CD8-positive, alpha-beta T cell (primary cell): ENCODE measurements at regions of chr3 and their contacts with region 1.

Region 1: DNA sequence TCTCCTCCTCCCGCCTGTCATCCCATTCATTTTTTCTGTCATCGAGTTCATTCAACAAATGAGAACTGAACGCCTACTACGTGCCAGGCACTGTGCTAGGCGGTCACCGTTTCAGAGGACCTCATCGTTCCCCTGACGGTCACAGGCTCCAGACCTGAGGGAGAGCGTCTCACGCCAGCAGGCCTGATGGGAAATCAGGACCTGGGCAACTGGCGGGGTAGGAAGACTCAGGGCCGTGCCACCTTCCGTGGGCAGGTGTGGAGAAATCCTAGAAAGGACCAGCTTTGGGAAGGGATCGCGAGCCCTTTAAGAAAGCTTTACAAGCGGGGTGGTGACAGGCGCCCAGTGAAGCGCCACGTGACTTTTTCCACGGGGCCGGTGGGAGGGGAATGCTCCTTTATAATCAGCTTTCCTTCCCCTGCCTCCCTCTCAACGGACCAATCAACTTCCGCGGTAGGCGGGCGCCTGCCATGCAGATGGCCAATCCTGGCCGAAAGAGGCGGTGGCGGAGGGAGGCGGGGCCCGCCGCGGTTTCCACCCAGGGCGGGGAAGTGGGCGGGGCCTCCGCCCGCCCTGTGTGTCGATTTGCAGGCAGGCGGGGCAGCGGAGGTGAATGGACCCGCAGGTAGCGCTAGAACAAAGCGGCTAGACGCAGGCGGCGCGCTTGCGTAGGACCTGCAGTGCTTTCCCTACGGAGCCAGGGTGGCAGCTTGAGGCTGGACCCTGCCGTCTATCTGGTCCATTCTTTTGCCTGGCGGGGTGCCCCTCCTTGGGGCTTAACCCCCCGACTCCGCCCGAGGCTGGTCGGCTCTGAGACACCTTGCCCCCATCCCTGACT is 816 bp upstream of the DUSP7 start:
- DNase-seq: peak; percentile 99 to 100 (median 99)
- ATAC-seq: peak; percentile 84
- H3K4me3 ChIP-seq: peak overlapping the region; percentile 68 to 77
- H3K4me3 Mint-ChIP-seq: peak overlapping the region; percentile 91
- H3K27ac ChIP-seq: peak overlapping the region; percentile 52 to 87
- H3K27ac Mint-ChIP-seq: peak overlapping the region; percentile 90
- H3K4me1 ChIP-seq: peaks cover 36% of the 10 kb centered on the region
- H3K4me1 Mint-ChIP-seq: peaks cover 35% of the 10 kb centered on the region
- H3K27me3 ChIP-seq: no peaks in the 10 kb centered on the region
- H3K27me3 Mint-ChIP-seq: no peaks in the 10 kb centered on the region
- CTCF ChIP-seq: no peak

Region 2: DNA sequence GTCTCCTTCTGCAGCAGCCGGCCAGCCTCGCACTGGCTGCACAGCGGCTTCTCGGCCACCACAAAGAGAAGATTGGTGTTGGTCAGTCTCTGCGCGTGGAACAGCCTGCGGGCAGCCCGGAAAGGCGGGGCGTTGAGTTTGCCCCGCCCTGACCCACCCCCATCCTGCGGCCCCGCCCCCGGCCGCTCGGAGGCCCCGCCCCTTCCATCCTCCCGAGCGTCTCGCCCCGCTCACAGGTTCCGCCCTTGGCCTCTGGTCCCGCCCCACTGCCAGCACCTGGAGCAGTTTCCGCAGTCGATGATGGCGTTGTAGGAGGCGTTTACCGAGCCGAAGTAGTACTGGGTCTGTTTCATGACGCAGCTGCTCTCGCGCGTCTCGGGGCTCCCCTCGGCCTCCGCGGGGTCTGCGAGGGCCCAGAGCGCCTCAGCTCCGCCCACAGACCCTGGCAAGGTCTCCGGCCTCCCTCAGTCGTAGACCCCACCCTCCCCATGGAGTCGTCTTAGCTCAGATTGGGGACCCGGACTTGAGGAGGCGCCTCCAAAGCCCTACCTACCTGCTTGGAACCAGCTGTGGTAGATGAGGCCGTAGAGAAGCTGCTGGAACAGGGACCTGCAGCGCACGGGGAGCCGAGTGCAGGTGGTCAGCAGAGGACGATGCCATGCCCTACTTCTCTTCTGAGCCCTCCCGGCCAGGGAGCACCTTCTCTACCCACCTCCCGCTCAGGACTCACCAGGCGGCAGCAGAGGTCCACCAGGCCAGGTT is 1691.9 kb before region 1 on chr3:
- CTCF ChIA-PET with region 1: no interaction called
- POLR2A ChIA-PET with region 1: no interaction called
- intact Hi-C with region 1: loop called in 1 of 2 experiments (anchors 10 kb)
- DNase-seq: peak; percentile 89 to 98 (median 94)
- ATAC-seq: peak; percentile 95
- H3K4me3 ChIP-seq: peak overlapping the region; percentile 68 to 81
- H3K4me3 Mint-ChIP-seq: peak overlapping the region; percentile 87
- H3K27ac ChIP-seq: peak overlapping the region; percentile 91 to 92
- H3K27ac Mint-ChIP-seq: peak overlapping the region; percentile 95
- H3K4me1 ChIP-seq: peaks cover 20% of the 10 kb centered on the region
- H3K4me1 Mint-ChIP-seq: peaks cover 35% of the 10 kb centered on the region
- H3K27me3 ChIP-seq: no peaks in the 10 kb centered on the region
- H3K27me3 Mint-ChIP-seq: no peaks in the 10 kb centered on the region
- CTCF ChIP-seq: no peak

Region 3: DNA sequence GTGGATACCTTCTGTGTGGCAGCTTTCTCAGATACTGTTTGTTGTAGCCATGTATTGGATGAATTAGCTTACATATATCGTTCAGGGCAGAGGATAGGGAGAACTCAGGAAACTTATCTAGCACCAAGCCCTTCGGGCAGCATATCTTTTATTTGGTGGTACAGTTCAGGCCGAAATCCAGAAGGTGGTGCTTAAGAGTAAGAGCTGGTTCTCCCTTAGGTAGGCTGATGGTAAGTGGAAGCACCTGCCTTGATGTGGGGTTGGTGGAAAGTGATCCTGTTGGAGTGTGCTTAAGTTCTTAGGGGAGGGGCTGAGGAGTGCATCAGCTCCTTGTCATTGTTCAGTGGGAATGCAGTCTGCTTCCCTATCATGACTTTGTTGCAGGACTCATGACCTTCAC is 1195.0 kb before region 1 on chr3:
- CTCF ChIA-PET with region 1: no interaction called
- POLR2A ChIA-PET with region 1: no interaction called
- intact Hi-C with region 1: no loop called
- DNase-seq: no peak
- ATAC-seq: no peak
- H3K4me3 ChIP-seq: no peak overlapping the region
- H3K4me3 Mint-ChIP-seq: no peak overlapping the region
- H3K27ac ChIP-seq: no peak overlapping the region
- H3K27ac Mint-ChIP-seq: no peak overlapping the region
- H3K4me1 ChIP-seq: no peaks in the 10 kb centered on the region
- H3K4me1 Mint-ChIP-seq: no peaks in the 10 kb centered on the region
- H3K27me3 ChIP-seq: no peaks in the 10 kb centered on the region
- H3K27me3 Mint-ChIP-seq: peaks cover 10% of the 10 kb centered on the region
- CTCF ChIP-seq: no peak

Region 4: DNA sequence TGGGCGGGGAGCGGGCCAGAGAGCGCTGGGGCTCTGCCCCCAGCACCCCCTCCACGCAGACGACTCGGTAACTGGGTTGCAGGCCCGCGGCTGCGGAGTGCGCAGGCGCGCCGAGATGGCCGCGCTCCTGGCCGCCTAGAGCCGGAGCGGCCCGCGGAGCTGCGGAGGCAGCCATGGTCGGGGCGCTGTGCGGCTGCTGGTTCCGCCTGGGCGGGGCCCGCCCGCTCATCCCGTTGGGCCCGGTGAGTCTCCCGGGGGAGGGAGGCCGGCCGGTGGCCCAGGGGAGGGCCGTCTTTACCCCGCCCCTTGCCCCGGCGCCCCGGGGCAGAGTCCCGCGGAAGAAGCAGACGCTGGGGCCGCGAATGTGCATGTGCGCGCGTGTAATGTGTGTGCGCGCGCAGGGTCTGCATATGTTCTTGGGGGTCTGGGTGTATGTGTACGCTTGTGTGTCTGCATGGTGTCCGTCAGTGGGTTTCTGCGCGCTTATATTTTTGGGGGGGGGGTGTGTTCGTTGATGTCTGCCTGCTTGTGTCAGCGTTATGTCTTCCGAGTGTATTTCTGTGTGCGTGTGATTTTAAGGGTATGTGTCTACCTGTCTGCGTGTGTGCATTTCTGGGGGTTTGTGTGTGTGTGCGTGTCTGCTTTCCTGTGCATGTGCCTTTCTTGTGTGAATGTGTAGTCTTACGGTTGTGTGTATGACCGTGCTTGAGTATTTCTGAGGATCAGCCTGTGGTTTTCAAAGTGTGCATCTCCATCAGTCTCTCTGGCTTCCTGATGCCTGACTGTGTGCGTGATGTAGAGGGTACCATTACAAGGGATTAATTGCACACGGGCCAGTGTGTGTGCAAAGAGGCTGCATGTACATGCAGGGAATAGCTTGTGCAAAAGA is 82.0 kb before region 1 on chr3 and contains the start of gene ABHD14A:
- CTCF ChIA-PET with region 1: interaction called, 6 read pairs
- POLR2A ChIA-PET with region 1: interaction called, 3 read pairs
- intact Hi-C with region 1: loop called in 1 of 2 experiments (anchors 1 kb)
- DNase-seq: peak; percentile 35 to 89 (median 69)
- ATAC-seq: peak; percentile 66
- H3K4me3 ChIP-seq: peak within 1 kb of the TSS; percentile 86 to 92
- H3K4me3 Mint-ChIP-seq: peak within 1 kb of the TSS; percentile 88
- H3K27ac ChIP-seq: peak within 1 kb of the TSS; percentile 50 to 72
- H3K27ac Mint-ChIP-seq: peak within 1 kb of the TSS; percentile 87
- H3K4me1 ChIP-seq: peaks cover 33% of the 10 kb centered on the region
- H3K4me1 Mint-ChIP-seq: peaks cover 31% of the 10 kb centered on the region
- H3K27me3 ChIP-seq: no peaks in the 10 kb centered on the region
- H3K27me3 Mint-ChIP-seq: no peaks in the 10 kb centered on the region
- CTCF ChIP-seq: no peak
- total RNA-seq, gene ABHD14A: 6.8 to 6.9 TPM

Region 5: GRCh38 chr3:52123106-52123725 is 66.0 kb after region 1 on chr3:
- CTCF ChIA-PET with region 1: interaction called, 25 read pairs
- POLR2A ChIA-PET with region 1: no interaction called
- intact Hi-C with region 1: loop called (anchors 2 to 5 kb)
- DNase-seq: peak; percentile 47 to 85 (median 74)
- ATAC-seq: peak; percentile 97
- H3K4me3 ChIP-seq: no peak overlapping the region
- H3K4me3 Mint-ChIP-seq: no peak overlapping the region
- H3K27ac ChIP-seq: no peak overlapping the region
- H3K27ac Mint-ChIP-seq: no peak overlapping the region
- H3K4me1 ChIP-seq: no peaks in the 10 kb centered on the region
- H3K4me1 Mint-ChIP-seq: no peaks in the 10 kb centered on the region
- H3K27me3 ChIP-seq: no peaks in the 10 kb centered on the region
- H3K27me3 Mint-ChIP-seq: no peaks in the 10 kb centered on the region
- CTCF ChIP-seq: peak; percentile 92

Region 6: DNA sequence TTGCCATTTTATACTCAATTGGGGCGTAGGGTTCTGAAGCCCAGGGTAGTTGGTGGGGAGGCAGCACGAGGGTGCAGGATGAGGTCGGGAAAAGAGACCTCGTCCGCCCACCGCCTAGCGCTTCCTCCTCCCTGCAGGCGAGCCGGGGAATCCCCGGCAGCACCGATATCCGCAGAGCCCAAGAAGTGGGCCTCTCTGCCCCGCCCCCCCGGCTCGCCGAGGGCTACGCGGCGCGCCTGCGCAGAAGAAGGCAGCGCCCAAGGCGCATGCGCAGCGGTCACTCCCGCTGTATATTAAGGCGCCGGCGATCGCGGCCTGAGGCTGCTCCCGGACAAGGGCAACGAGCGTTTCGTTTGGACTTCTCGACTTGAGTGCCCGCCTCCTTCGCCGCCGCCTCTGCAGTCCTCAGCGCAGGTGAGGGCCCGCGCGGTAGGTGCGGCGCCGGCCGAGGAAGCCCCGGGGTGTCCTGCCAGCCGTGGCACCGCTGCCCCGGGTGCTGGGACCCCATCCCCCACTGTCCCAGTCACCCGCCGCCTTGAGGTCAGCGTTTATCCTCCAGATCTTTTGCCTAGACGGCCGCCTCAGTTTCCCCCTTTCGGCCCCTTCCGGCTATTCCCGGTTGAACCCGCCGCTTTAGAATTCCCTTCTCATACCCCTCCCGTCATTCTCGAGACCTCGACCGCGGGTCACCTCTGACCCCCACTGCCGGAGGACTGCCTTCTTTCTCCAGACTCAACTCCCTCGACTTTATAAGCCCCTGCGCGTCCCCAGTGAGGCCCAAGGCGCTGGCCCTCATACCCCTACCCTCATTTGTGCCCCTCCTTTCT is 140.9 kb after region 1 on chr3 and contains the start of gene ALAS1:
- CTCF ChIA-PET with region 1: no interaction called
- POLR2A ChIA-PET with region 1: no interaction called
- intact Hi-C with region 1: loop called in 1 of 2 experiments (anchors 1 kb)
- DNase-seq: peak; percentile 86 to 98 (median 95)
- ATAC-seq: peak; percentile 98
- H3K4me3 ChIP-seq: peak within 1 kb of the TSS; percentile 88 to 93
- H3K4me3 Mint-ChIP-seq: peak within 1 kb of the TSS; percentile 96
- H3K27ac ChIP-seq: peak within 1 kb of the TSS; percentile 69 to 86
- H3K27ac Mint-ChIP-seq: peak within 1 kb of the TSS; percentile 94
- H3K4me1 ChIP-seq: peaks cover 32% of the 10 kb centered on the region
- H3K4me1 Mint-ChIP-seq: peaks cover 41% of the 10 kb centered on the region
- H3K27me3 ChIP-seq: no peaks in the 10 kb centered on the region
- H3K27me3 Mint-ChIP-seq: no peaks in the 10 kb centered on the region
- CTCF ChIP-seq: no peak
- total RNA-seq, gene ALAS1: 6.0 to 6.6 TPM

Region 7: DNA sequence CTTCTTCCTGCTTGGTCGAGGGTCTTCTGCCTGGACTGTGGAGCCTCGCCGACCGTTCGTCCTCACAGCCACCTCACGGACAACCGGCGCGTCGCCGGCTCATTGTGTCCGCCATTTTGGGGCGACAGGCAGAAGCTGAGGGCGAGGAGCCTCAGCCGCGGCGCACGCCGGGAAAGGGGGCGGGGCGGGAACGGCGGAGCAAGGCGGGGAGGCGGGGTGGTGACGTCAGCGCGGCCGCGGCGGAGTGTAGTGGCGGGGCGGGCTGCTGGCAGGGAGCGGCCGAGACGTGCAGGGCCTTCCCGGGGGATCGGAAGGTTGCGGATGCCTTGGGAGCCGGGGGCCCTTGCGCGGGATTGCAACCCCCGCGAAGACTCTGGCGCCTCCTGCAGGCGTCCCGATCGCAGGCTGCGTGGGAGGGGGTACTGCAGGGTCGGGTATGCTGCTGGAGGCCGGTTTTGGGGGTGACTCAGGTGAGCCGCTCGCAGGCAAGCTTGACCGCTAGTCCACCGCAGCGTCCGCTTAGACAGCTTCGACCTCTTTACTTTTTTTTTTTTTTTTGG is 221.4 kb after region 1 on chr3 and contains the start of gene WDR82:
- CTCF ChIA-PET with region 1: no interaction called
- POLR2A ChIA-PET with region 1: interaction called, 3 read pairs
- intact Hi-C with region 1: loop called (anchors 5 to 10 kb)
- DNase-seq: peak; percentile 94 to 99 (median 98)
- ATAC-seq: peak; percentile 77
- H3K4me3 ChIP-seq: peak within 1 kb of the TSS; percentile 65 to 95
- H3K4me3 Mint-ChIP-seq: peak within 1 kb of the TSS; percentile 94
- H3K27ac ChIP-seq: peak within 1 kb of the TSS; percentile 79 to 93
- H3K27ac Mint-ChIP-seq: peak within 1 kb of the TSS; percentile 99
- H3K4me1 ChIP-seq: peaks cover 49% of the 10 kb centered on the region
- H3K4me1 Mint-ChIP-seq: peaks cover 72% of the 10 kb centered on the region
- H3K27me3 ChIP-seq: no peaks in the 10 kb centered on the region
- H3K27me3 Mint-ChIP-seq: no peaks in the 10 kb centered on the region
- CTCF ChIP-seq: peak; percentile 36
- total RNA-seq, gene WDR82: 115 to 117 TPM